ENCODE measurements at regions of chr3 and their contacts with region 1.

Region 1: GRCh38 chr3:195259475-195260279 is 11.3 kb downstream of the XXYLT1 start:
- DNase-seq: peak; percentile 97

Region 2: DNA sequence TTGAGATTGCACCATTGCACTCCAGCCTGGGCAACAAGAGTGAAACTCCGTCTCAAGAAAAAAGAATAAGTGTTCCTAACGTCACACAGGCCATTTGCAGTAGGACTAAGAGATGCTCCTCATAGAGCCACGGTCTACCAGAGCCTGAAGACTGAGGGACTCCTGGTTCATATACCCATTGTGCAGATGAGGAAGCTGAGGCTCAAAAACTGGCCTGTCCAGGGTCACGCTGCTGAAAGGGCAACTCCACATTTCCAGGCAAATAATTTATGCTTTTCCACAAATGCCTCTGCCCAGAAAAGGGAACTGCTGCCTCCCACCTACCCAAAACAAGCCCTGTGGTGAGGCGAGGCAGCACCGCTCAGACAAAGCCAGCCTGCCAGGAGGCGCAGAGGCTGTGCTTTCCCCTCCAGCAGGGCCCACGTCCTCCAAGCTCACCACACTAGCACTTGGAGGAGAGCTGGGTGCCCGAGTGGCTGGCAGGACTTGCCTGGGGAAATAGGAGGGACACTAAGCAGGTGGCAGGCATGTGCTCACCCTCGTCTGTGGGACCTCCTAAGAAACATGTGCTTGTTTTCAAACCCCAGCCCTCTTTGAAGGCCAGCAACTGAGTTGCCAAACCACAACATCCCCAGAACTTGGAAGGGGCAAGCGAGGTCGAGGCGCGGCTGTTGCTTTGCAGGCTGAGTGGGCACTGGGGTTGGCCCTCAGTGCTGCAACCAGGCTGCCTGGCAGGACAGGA is 184.3 kb before region 1 on chr3:
- intact Hi-C with region 1: no loop called
- DNase-seq: peak; percentile 72

Region 3: GRCh38 chr3:195133462-195133861 is 126.2 kb before region 1 on chr3:
- intact Hi-C with region 1: loop called in 1 of 2 experiments (anchors 10 kb)
- DNase-seq: no peak

Measured in posterior vena cava (tissue), 2 donors.